ENCODE measurements at regions of chr1 and their contacts with region 1.

Region 1: DNA sequence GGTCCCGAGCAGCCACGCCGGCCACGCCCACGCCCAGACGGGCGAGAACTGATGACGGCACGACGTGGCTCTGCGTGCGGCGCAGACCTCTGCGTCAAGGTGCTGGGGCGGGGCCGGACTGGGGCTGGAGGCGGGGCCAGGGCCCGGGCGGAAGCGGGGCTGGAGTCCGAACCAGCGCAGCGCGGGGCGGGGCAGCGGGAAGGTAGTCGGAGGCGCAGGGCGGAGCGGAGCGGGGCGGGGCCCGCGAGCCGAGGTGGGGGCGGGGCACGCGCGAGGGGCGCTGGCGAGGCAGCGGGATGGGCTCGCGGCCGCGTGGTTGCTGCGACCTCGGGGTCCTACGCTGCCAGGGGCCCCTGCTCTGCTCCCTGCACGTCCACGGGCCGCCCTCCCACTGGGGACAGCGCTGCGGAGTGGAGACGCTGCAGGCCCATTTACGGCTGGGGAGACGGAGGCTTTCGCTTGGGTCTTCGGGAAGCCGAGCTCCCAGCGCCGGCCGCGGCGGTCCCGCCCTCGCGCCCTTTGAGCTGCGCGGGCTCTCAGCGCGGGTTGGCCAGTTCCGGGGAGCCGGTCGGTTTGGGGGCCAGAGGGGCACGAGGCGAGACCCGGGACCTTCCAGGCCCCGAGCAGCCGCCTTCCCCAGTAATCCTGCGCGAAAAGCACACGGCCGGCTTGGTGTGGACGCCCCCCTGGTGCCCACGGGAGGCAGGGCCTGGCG is at the start of gene PEX10:
- DNase-seq: peak; percentile 98
- ATAC-seq: peak; percentile 92 to 98 (median 93)
- H3K4me3 ChIP-seq: peak within 1 kb of the TSS; percentile 56
- H3K4me3 Mint-ChIP-seq: peak within 1 kb of the TSS; percentile 86
- H3K27ac ChIP-seq: peak within 1 kb of the TSS; percentile 70
- H3K27ac Mint-ChIP-seq: peak within 1 kb of the TSS; percentile 66 to 90
- H3K4me1 ChIP-seq: peaks cover 55% of the 10 kb centered on the region
- H3K4me1 Mint-ChIP-seq: peaks cover 23 to 38% of the 10 kb centered on the region in 2 donors
- H3K27me3 ChIP-seq: no peaks in the 10 kb centered on the region
- H3K27me3 Mint-ChIP-seq: no peaks in the 10 kb centered on the region
- CTCF ChIP-seq: no peak
- total RNA-seq, gene PEX10: 8.1 to 11.1 (median 9.8) TPM

Region 2: DNA sequence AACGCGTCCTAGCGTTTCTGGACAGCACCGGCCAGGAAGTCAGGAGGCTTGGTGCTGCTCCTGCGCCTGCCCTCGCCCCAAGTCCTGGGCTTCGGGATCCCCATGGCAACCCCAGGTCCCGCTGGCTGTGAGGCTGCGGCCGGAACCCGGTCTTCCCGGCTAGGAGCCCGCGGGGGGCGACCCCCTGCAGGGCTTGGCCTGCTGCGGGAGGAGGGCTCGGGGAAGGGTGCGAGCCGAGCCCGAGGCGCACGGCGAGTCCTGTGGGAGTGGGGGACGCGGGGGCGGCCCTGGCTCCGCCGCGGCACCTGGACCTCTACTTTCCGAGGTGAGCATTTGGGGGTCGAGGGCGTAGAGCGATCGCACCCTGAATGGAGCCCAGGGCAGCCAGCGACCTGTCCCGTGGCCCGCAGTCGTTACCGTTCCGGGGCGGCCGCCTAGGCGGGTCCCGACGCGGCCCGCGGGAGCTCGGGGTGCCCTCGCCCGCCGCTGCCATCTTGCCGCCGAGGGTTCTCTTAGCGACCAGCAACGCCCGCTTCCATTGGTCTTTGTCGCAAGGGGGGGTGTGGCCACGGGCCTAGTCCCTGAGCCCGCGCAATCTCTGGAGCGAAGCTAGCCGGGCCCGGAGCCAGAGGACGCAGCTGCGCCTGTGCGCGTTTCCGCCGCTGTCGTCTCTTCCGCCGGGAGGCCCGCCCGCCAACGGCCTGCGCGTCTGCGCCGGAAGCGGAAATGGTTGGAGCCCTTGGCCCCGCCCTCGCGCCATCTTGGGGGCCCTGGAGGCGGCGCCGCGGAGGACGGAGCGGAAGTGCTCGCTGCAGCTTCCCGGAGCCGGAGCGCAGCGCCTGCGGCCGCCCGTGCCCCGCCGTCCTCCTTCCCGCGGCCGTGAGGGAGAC is 21.4 kb before region 1 on chr1 and contains the starts of genes MORN1 and RER1:
- intact Hi-C with region 1: loop called (anchors 1 kb)
- DNase-seq: peak; percentile 97 to 100
- ATAC-seq: peak; percentile 94 to 99 (median 95)
- H3K4me3 ChIP-seq: peak within 1 kb of the TSS; percentile 50
- H3K4me3 Mint-ChIP-seq: peak within 1 kb of the TSS; percentile 89
- H3K27ac ChIP-seq: peak within 1 kb of the TSS; percentile 52
- H3K27ac Mint-ChIP-seq: peak within 1 kb of the TSS; percentile 77 to 90
- H3K4me1 ChIP-seq: peaks cover 34% of the 10 kb centered on the region
- H3K4me1 Mint-ChIP-seq: peaks cover 28 to 38% of the 10 kb centered on the region in 2 donors
- H3K27me3 ChIP-seq: no peaks in the 10 kb centered on the region
- H3K27me3 Mint-ChIP-seq: no peaks in the 10 kb centered on the region
- CTCF ChIP-seq: no peak
- total RNA-seq, gene MORN1: 8.0 to 9.3 (median 8.8) TPM
- total RNA-seq, gene RER1: 89.2 to 98.9 (median 91.9) TPM

Region 3: GRCh38 chr1:2468041-2468472 is 55.4 kb after region 1 on chr1:
- intact Hi-C with region 1: no loop called
- DNase-seq: peak; percentile 51 to 72
- ATAC-seq: peak in 2 of 3 donors; percentile 58 to 61
- H3K4me3 ChIP-seq: no peak overlapping the region
- H3K4me3 Mint-ChIP-seq: no peak overlapping the region
- H3K27ac ChIP-seq: no peak overlapping the region
- H3K27ac Mint-ChIP-seq: no peak overlapping the region
- H3K4me1 ChIP-seq: peaks cover 34% of the 10 kb centered on the region
- H3K4me1 Mint-ChIP-seq: peaks cover 0 to 21% of the 10 kb centered on the region in 2 donors
- H3K27me3 ChIP-seq: no peaks in the 10 kb centered on the region
- H3K27me3 Mint-ChIP-seq: no peaks in the 10 kb centered on the region
- CTCF ChIP-seq: no peak

Region 4: DNA sequence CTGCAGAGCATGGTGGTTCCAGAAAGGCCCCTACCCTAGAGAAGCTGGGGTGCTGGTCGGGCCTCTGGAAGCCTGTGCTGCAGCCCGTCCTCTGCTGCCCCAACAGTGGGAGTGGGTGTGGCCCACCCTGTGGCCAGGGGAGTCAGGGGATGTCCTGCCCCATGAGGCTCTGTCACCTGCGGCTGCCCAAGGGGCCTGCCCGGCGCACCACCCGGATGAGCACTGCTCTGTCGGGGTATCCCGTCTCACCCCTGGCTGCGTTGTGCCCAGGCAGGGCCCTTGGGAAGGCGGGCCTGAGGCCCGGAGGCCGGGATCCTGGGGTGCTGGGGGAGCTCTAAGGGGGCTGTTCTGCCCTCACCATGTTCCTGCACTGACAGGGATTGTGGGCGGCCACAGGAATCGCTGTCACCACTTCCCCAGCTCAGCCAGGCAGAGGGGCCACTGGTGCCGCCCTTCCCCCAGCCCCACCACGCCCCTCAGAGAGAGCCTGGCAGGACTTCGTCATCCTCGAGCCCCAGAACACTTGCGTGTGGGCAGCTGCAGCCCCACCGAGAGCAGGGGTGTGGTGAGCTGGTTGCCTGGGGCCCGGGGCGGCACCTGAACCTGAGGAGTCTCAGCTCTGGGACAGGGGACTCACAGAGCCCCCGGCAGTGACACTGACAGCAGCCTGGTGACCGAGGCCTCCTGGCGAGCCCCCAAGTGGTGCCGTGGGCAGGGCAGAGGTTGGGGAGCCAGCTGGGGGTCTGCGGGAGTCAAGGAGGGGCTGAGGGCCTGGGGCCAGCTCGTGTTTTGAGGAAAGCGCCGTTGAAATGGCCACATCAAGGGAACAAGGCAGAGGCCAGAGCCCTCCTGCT is 93.6 kb after region 1 on chr1:
- intact Hi-C with region 1: no loop called
- DNase-seq: no peak
- ATAC-seq: peak in 1 of 3 donors; percentile 12
- H3K4me3 ChIP-seq: no peak overlapping the region
- H3K4me3 Mint-ChIP-seq: no peak overlapping the region
- H3K27ac ChIP-seq: no peak overlapping the region
- H3K27ac Mint-ChIP-seq: peak overlapping the region in 1 of 2 donors; percentile 48
- H3K4me1 ChIP-seq: peaks cover 12% of the 10 kb centered on the region
- H3K4me1 Mint-ChIP-seq: peaks cover 0 to 6% of the 10 kb centered on the region in 2 donors
- H3K27me3 ChIP-seq: no peaks in the 10 kb centered on the region
- H3K27me3 Mint-ChIP-seq: no peaks in the 10 kb centered on the region
- CTCF ChIP-seq: no peak

Region 5: GRCh38 chr1:2586154-2587070 is 173.7 kb after region 1 on chr1 and contains the start of gene PRXL2B:
- intact Hi-C with region 1: loop called (anchors 2 kb)
- DNase-seq: peak; percentile 97 to 98
- ATAC-seq: peak; percentile 75 to 90 (median 81)
- H3K4me3 ChIP-seq: peak within 1 kb of the TSS; percentile 84
- H3K4me3 Mint-ChIP-seq: peak within 1 kb of the TSS; percentile 92
- H3K27ac ChIP-seq: peak within 1 kb of the TSS; percentile 100
- H3K27ac Mint-ChIP-seq: peak within 1 kb of the TSS; percentile 95
- H3K4me1 ChIP-seq: peaks cover 36% of the 10 kb centered on the region
- H3K4me1 Mint-ChIP-seq: peaks cover 6 to 28% of the 10 kb centered on the region in 2 donors
- H3K27me3 ChIP-seq: no peaks in the 10 kb centered on the region
- H3K27me3 Mint-ChIP-seq: no peaks in the 10 kb centered on the region
- CTCF ChIP-seq: no peak
- total RNA-seq, gene PRXL2B: 11.3 to 15.1 (median 11.6) TPM

Region 6: GRCh38 chr1:2650967-2651645 is 238.4 kb after region 1 on chr1:
- intact Hi-C with region 1: no loop called
- DNase-seq: no peak
- ATAC-seq: no peak
- H3K4me3 ChIP-seq: no peak overlapping the region
- H3K4me3 Mint-ChIP-seq: no peak overlapping the region
- H3K27ac ChIP-seq: no peak overlapping the region
- H3K27ac Mint-ChIP-seq: no peak overlapping the region
- H3K4me1 ChIP-seq: no peaks in the 10 kb centered on the region
- H3K4me1 Mint-ChIP-seq: peaks cover 0 to 19% of the 10 kb centered on the region in 2 donors
- H3K27me3 ChIP-seq: peaks cover 35% of the 10 kb centered on the region
- H3K27me3 Mint-ChIP-seq: peaks cover 25 to 37% of the 10 kb centered on the region in 2 donors
- CTCF ChIP-seq: no peak

Region 7: DNA sequence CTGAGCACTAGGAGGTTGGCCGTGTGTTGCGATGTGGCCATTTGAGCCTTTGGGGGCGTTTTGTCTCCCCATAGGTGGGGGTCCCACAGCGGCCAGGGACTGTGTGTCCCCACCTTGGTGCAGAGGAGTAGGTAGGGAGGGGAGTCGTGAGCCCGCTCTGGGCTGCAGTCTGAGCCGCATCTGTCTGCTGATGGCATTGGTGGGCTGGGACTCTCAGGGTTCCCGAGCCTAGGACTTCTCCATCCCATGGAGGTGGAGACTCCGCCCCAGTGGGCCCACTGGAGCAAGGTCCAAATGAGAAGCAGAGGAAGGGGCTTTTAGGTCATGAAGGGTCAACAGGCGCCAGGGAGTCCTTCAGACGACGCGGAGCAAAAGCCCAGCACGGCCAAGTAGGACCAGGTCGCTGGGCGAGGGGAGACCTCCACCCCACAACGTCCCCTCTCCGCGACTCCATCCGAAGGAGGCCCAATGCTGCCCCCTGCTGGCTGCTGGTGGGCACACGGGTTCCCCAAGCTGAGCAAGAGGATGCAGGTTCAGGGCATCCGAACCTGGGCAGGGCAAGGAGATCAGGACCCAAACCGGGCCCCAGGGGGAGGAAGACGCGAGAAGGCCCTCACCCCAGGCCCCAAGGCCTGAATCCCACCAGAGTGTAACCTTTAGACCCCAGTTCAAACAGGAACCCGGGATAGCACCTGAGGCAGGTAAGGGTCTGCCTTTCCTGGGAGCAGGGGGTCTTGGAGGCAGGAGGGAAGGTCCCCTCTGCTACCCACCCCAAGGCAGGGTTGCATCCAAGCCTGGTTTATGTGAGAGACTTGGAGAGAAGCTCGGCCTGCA is 373.9 kb after region 1 on chr1:
- intact Hi-C with region 1: loop called (anchors 1 kb)
- DNase-seq: peak; percentile 63 to 83
- ATAC-seq: peak; percentile 50 to 74 (median 71)
- H3K4me3 ChIP-seq: no peak overlapping the region
- H3K4me3 Mint-ChIP-seq: no peak overlapping the region
- H3K27ac ChIP-seq: no peak overlapping the region
- H3K27ac Mint-ChIP-seq: no peak overlapping the region
- H3K4me1 ChIP-seq: peaks cover 2% of the 10 kb centered on the region
- H3K4me1 Mint-ChIP-seq: no peaks in the 10 kb centered on the region
- H3K27me3 ChIP-seq: peaks cover 3% of the 10 kb centered on the region
- H3K27me3 Mint-ChIP-seq: peaks cover 3 to 22% of the 10 kb centered on the region in 2 donors
- CTCF ChIP-seq: peak; percentile 78

Region 8: GRCh38 chr1:3423245-3423829 is 1010.7 kb after region 1 on chr1:
- intact Hi-C with region 1: loop called (anchors 10 kb)
- DNase-seq: no peak
- ATAC-seq: no peak
- H3K4me3 ChIP-seq: no peak overlapping the region
- H3K4me3 Mint-ChIP-seq: no peak overlapping the region
- H3K27ac ChIP-seq: no peak overlapping the region
- H3K27ac Mint-ChIP-seq: no peak overlapping the region
- H3K4me1 ChIP-seq: peaks cover 4% of the 10 kb centered on the region
- H3K4me1 Mint-ChIP-seq: no peaks in the 10 kb centered on the region
- H3K27me3 ChIP-seq: peaks cover 4% of the 10 kb centered on the region
- H3K27me3 Mint-ChIP-seq: peaks cover 7 to 18% of the 10 kb centered on the region in 2 donors
- CTCF ChIP-seq: no peak